PC-3 (cell line): ENCODE measurements at regions of chr19 and their contacts with region 1.

Region 1: DNA sequence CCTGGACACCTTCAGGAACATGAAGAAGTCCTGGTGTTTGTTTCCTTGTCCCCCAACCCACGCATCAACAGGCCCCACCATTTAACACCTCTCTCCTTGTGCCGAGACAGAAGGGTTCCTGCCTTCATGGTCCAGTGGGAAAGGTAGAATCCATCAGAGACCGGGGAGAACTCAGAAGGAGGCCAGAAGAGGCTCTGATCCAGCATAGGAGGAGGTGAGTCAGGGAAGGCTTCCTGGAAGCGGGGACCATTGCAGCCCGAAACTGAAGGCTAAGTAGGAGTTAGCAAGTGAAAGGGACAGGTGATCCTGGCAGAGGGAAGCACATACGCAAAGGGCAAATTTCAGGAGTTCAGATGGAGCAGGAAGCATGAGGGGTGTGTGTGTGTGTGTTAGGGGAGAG is 484 bp downstream of the ICAM3 start:
- DNase-seq: no peak
- ATAC-seq: no peak
- H3K4me3 ChIP-seq: no peak overlapping the region
- H3K27ac ChIP-seq: no peak overlapping the region
- H3K4me1 ChIP-seq: peaks cover 10% of the 10 kb centered on the region; the same call in 1 of the 2 replicates
- H3K27me3 ChIP-seq: no peaks in the 10 kb centered on the region
- CTCF ChIP-seq: no peak

Region 2: GRCh38 chr19:9971166-9971897 is 367.6 kb before region 1 on chr19:
- CTCF ChIA-PET with region 1: no interaction called
- POLR2A ChIA-PET with region 1: no interaction called
- intact Hi-C with region 1: no loop called
- DNase-seq: no peak
- ATAC-seq: no peak
- H3K4me3 ChIP-seq: no peak overlapping the region
- H3K27ac ChIP-seq: no peak overlapping the region
- H3K4me1 ChIP-seq: no peaks in the 10 kb centered on the region
- H3K27me3 ChIP-seq: peaks cover 29% of the 10 kb centered on the region
- CTCF ChIP-seq: no peak

Region 3: GRCh38 chr19:10251792-10252694 is 86.9 kb before region 1 on chr19 and contains the start of gene MRPL4:
- CTCF ChIA-PET with region 1: no interaction called
- POLR2A ChIA-PET with region 1: no interaction called
- intact Hi-C with region 1: no loop called
- DNase-seq: peak; percentile 100
- ATAC-seq: peak; percentile 96
- H3K4me3 ChIP-seq: peak within 1 kb of the TSS; percentile 97
- H3K27ac ChIP-seq: peak within 1 kb of the TSS; percentile 46
- H3K4me1 ChIP-seq: peaks cover 8% of the 10 kb centered on the region; the same call in 1 of the 2 replicates
- H3K27me3 ChIP-seq: no peaks in the 10 kb centered on the region
- CTCF ChIP-seq: no peak
- total RNA-seq, gene MRPL4: 336 and 427 TPM in 2 replicates

Region 4: DNA sequence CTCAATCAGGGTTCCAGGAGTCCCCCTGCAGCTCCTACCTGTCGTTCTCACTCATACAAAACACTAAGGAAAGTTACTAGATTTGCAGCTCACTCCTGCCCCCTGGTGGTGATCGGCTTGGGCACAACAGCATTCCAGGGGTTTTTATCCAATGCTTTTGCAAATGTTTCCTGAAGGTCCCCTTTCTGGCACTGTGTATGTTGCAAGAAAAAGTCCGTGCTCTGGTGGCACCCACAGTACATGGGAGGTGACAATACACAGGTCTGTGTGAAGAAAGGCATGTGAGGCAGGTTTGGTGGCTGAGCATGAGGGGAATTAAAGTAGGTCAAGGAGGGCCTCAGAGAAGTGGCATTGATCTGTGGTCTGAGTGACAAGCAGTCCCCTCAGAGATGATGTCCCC is 50.0 kb after region 1 on chr19:
- CTCF ChIA-PET with region 1: interaction called, 12 read pairs
- POLR2A ChIA-PET with region 1: no interaction called
- intact Hi-C with region 1: loop called (anchors 10 kb)
- DNase-seq: peak; percentile 94
- ATAC-seq: peak; percentile 77
- H3K4me3 ChIP-seq: no peak overlapping the region
- H3K27ac ChIP-seq: no peak overlapping the region
- H3K4me1 ChIP-seq: no peaks in the 10 kb centered on the region
- H3K27me3 ChIP-seq: no peaks in the 10 kb centered on the region
- CTCF ChIP-seq: peak; percentile 98

Region 5: GRCh38 chr19:10450853-10451609 is 112.1 kb after region 1 on chr19:
- CTCF ChIA-PET with region 1: no interaction called
- POLR2A ChIA-PET with region 1: no interaction called
- intact Hi-C with region 1: no loop called
- DNase-seq: peak; percentile 44
- ATAC-seq: peak; percentile 38
- H3K4me3 ChIP-seq: no peak overlapping the region
- H3K27ac ChIP-seq: no peak overlapping the region
- H3K4me1 ChIP-seq: no peaks in the 10 kb centered on the region
- H3K27me3 ChIP-seq: no peaks in the 10 kb centered on the region
- CTCF ChIP-seq: no peak